ENCODE measurements at regions of chr6 and their contacts with region 1.

Region 1: GRCh38 chr6:47934023-47934422 is 152.2 kb downstream of the OPN5 start:
- DNase-seq: peak; percentile 11 to 24
- ATAC-seq: peak in 4 of 8 donors; percentile 52 to 85 (median 59)
- H3K4me3 ChIP-seq: no peak overlapping the region
- H3K27ac ChIP-seq: peak overlapping the region in 2 of 10 donors; percentile 2 to 45
- H3K4me1 ChIP-seq: peaks cover 0 to 27% (median 4%) of the 10 kb centered on the region in 9 donors
- H3K27me3 ChIP-seq: no peaks in the 10 kb centered on the region
- CTCF ChIP-seq: no peak

Region 2: GRCh38 chr6:47804821-47805220 is 129.2 kb before region 1 on chr6:
- intact Hi-C with region 1: loop called in 1 of 10 experiments (anchors 10 kb)
- DNase-seq: no peak
- ATAC-seq: no peak
- H3K4me3 ChIP-seq: no peak overlapping the region
- H3K27ac ChIP-seq: no peak overlapping the region
- H3K4me1 ChIP-seq: no peaks in the 10 kb centered on the region
- H3K27me3 ChIP-seq: peaks cover 0 to 2% (median 0%) of the 10 kb centered on the region in 7 donors
- CTCF ChIP-seq: no peak

Measured in heart right ventricle (tissue), 16 donors.